Activated CD8-positive, alpha-beta T cell treated with anti-CD3 and anti-CD28 coated beads for 36 hours (primary cell): ENCODE measurements at regions of chr1 and their contacts with region 1.

Region 1: GRCh38 chr1:19596714-19597495 is 47.2 kb upstream of the NBL1 start:
- DNase-seq: peak; percentile 99
- ATAC-seq: peak; percentile 87
- H3K4me3 Mint-ChIP-seq: peak overlapping the region; percentile 84
- H3K27ac Mint-ChIP-seq: peak overlapping the region; percentile 99
- H3K4me1 Mint-ChIP-seq: peaks cover 42% of the 10 kb centered on the region
- H3K27me3 Mint-ChIP-seq: no peaks in the 10 kb centered on the region
- CTCF ChIP-seq: no peak

Region 2: GRCh38 chr1:19533626-19534025 is 63.3 kb before region 1 on chr1:
- CTCF ChIA-PET with region 1: no interaction called
- POLR2A ChIA-PET with region 1: no interaction called
- intact Hi-C with region 1: no loop called
- DNase-seq: no peak
- ATAC-seq: no peak
- H3K4me3 Mint-ChIP-seq: no peak overlapping the region
- H3K27ac Mint-ChIP-seq: no peak overlapping the region
- H3K4me1 Mint-ChIP-seq: peaks cover 3% of the 10 kb centered on the region
- H3K27me3 Mint-ChIP-seq: no peaks in the 10 kb centered on the region
- CTCF ChIP-seq: no peak

Region 3: DNA sequence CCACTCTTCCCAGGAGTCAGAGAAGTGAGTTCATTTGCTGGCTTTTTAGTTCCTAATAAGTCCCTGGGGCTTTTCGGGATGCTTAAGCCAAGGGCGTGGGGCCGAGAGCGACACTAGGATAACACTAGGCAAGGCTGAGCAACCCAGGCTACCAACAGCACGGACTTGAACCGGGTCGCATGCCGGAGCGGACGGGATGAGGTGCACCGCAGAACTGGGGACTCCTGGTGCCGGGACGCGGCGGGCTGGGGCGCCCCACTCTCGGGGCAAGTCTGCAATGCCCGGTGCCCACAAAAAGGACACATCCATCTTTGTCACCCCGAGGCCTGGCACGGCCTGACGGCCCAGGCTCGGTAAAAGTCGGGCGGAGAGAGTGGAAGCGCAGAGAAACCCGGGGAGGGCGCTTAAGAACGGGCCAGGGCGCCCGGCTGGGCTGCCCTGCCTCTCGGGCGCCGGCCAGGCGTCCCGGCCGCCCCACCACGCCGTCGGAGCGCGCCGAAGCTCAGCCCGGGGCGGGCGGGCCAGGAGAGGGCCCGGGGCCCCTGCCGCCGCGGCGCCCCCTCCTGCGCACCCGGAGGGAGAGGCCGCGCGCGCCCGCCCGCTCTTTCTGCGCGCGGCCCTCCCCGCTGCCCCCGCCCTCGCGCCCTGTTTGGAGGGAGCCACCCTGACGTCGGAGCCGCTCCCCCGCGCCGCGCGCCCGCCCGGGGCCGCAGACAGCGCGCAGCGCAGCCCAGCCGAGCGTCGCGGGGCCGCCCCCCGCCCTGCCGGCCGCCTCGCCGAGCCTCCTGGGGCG is 46.9 kb after region 1 on chr1 and contains the start of gene NBL1:
- CTCF ChIA-PET with region 1: no interaction called
- POLR2A ChIA-PET with region 1: interaction called, 11 read pairs
- intact Hi-C with region 1: loop called (anchors 5 kb)
- DNase-seq: peak; percentile 80
- ATAC-seq: peak; percentile 86
- H3K4me3 Mint-ChIP-seq: peak within 1 kb of the TSS; percentile 83
- H3K27ac Mint-ChIP-seq: peak within 1 kb of the TSS; percentile 69
- H3K4me1 Mint-ChIP-seq: peaks cover 28% of the 10 kb centered on the region
- H3K27me3 Mint-ChIP-seq: peaks cover 10% of the 10 kb centered on the region
- CTCF ChIP-seq: no peak
- total RNA-seq, gene NBL1: 27.0 to 27.6 TPM